Naive thymus-derived CD4-positive, alpha-beta T cell (primary cell): ENCODE measurements at regions of chr9 and their contacts with region 1.

Region 1: GRCh38 chr9:132582276-132582785 is at the start of gene BARHL1:
- DNase-seq: no peak
- ATAC-seq: no peak
- H3K4me3 ChIP-seq: peak within 1 kb of the TSS; percentile 54
- H3K4me3 Mint-ChIP-seq: peak within 1 kb of the TSS; percentile 67 to 82 (median 76)
- H3K27ac ChIP-seq: no peak within 1 kb of the TSS
- H3K27ac Mint-ChIP-seq: peak within 1 kb of the TSS in 4 of 9 donors; percentile 19 to 82 (median 53)
- H3K4me1 ChIP-seq: peaks cover 7 to 9% of the 10 kb centered on the region in 2 donors
- H3K4me1 Mint-ChIP-seq: peaks cover 0 to 14% (median 9%) of the 10 kb centered on the region in 7 donors
- H3K27me3 ChIP-seq: peaks cover 23 to 64% of the 10 kb centered on the region in 2 donors
- H3K27me3 Mint-ChIP-seq: peaks cover 62 to 91% (median 70%) of the 10 kb centered on the region in 5 donors
- total RNA-seq, gene BARHL1: not detected

Region 2: GRCh38 chr9:132412089-132412488 is 170.2 kb before region 1 on chr9:
- CTCF ChIA-PET with region 1: no interaction called
- POLR2A ChIA-PET with region 1: no interaction called
- intact Hi-C with region 1: loop called in 1 of 2 experiments (anchors 2 kb)
- DNase-seq: peak in 1 of 9 donors; percentile 27
- ATAC-seq: peak; percentile 33
- H3K4me3 ChIP-seq: no peak overlapping the region
- H3K4me3 Mint-ChIP-seq: peak overlapping the region in 4 of 10 donors; percentile 34 to 75 (median 52)
- H3K27ac ChIP-seq: no peak overlapping the region
- H3K27ac Mint-ChIP-seq: no peak overlapping the region
- H3K4me1 ChIP-seq: peaks cover 19 to 33% of the 10 kb centered on the region in 2 donors
- H3K4me1 Mint-ChIP-seq: peaks cover 9 to 29% (median 20%) of the 10 kb centered on the region in 7 donors
- H3K27me3 ChIP-seq: peaks cover 0 to 8% of the 10 kb centered on the region in 2 donors
- H3K27me3 Mint-ChIP-seq: peaks cover 45 to 73% (median 49%) of the 10 kb centered on the region in 5 donors